ENCODE measurements at regions of chr9 and their contacts with region 1.

Region 1: GRCh38 chr9:85741875-85742629 is at the start of gene AGTPBP1:
- DNase-seq: peak; percentile 99
- ATAC-seq: peak; percentile 92
- H3K4me3 Mint-ChIP-seq: peak within 1 kb of the TSS; percentile 93
- H3K27ac Mint-ChIP-seq: peak within 1 kb of the TSS; percentile 90
- H3K4me1 Mint-ChIP-seq: peaks cover 22% of the 10 kb centered on the region
- H3K27me3 Mint-ChIP-seq: peaks cover 8% of the 10 kb centered on the region
- CTCF ChIP-seq: no peak
- total RNA-seq, gene AGTPBP1: 25.9 and 26.7 TPM in 2 replicates

Region 2: GRCh38 chr9:85702726-85703289 is 39.2 kb before region 1 on chr9:
- CTCF ChIA-PET with region 1: interaction called, 4 read pairs
- POLR2A ChIA-PET with region 1: interaction called, 5 read pairs
- intact Hi-C with region 1: loop called (anchors 1 kb)
- DNase-seq: no peak
- ATAC-seq: no peak
- H3K4me3 Mint-ChIP-seq: no peak overlapping the region
- H3K27ac Mint-ChIP-seq: no peak overlapping the region
- H3K4me1 Mint-ChIP-seq: peaks cover 19% of the 10 kb centered on the region
- H3K27me3 Mint-ChIP-seq: no peaks in the 10 kb centered on the region
- CTCF ChIP-seq: no peak

Region 3: GRCh38 chr9:85729882-85730281 is 12.2 kb before region 1 on chr9:
- CTCF ChIA-PET with region 1: no interaction called
- POLR2A ChIA-PET with region 1: interaction called, 3 read pairs
- intact Hi-C with region 1: loop called (anchors 2 kb)
- DNase-seq: no peak
- ATAC-seq: no peak
- H3K4me3 Mint-ChIP-seq: no peak overlapping the region
- H3K27ac Mint-ChIP-seq: no peak overlapping the region
- H3K4me1 Mint-ChIP-seq: peaks cover 42% of the 10 kb centered on the region
- H3K27me3 Mint-ChIP-seq: no peaks in the 10 kb centered on the region
- CTCF ChIP-seq: no peak

Region 4: GRCh38 chr9:86282077-86282978 is 540.3 kb after region 1 on chr9 and contains the start of gene ISCA1:
- CTCF ChIA-PET with region 1: no interaction called
- POLR2A ChIA-PET with region 1: interaction called, 3 read pairs
- intact Hi-C with region 1: loop called (anchors 1 kb)
- DNase-seq: peak; percentile 99
- ATAC-seq: peak; percentile 88
- H3K4me3 Mint-ChIP-seq: peak within 1 kb of the TSS; percentile 92
- H3K27ac Mint-ChIP-seq: peak within 1 kb of the TSS; percentile 93
- H3K4me1 Mint-ChIP-seq: peaks cover 35% of the 10 kb centered on the region
- H3K27me3 Mint-ChIP-seq: no peaks in the 10 kb centered on the region
- CTCF ChIP-seq: no peak
- total RNA-seq, gene ISCA1: 16.0 TPM in 2 replicates

Region 5: DNA sequence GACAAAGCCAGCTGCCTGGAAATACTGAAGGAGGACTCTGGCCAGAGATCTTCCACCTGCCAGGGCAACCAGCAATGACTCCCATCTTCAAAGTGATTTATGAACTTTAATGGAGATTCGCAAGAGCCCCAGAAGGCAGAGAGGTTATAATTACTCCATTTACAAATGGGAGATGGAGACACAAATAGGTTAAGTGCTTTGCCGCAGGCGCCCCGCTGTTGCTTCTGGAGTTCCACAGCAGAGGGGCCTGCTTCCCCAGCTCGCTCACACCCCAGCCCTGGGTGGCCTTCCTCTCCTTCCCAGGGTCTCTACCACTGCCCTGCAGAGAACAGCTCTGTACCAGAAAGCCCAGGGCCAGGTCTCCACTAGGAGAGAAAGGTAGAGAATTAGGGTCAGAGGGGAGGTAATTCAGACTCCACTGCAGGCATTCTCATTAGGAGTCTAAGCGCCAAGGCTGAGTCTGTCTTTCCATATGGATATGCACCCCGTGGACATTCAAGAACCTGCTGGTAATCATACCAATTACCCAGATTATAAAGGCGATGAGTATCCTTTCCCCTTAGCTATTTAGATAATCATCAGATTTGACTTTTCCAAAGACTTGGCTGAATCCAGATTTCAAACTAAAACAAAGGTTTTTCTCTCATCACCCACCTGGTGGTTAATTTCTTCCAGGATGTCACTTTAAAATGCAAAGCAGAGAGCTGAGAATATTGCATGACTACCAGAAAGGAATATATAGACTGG is 769.7 kb after region 1 on chr9:
- CTCF ChIA-PET with region 1: no interaction called
- POLR2A ChIA-PET with region 1: no interaction called
- intact Hi-C with region 1: no loop called
- DNase-seq: no peak
- ATAC-seq: no peak
- H3K4me3 Mint-ChIP-seq: no peak overlapping the region
- H3K27ac Mint-ChIP-seq: no peak overlapping the region
- H3K4me1 Mint-ChIP-seq: no peaks in the 10 kb centered on the region
- H3K27me3 Mint-ChIP-seq: no peaks in the 10 kb centered on the region
- CTCF ChIP-seq: no peak

Region 6: DNA sequence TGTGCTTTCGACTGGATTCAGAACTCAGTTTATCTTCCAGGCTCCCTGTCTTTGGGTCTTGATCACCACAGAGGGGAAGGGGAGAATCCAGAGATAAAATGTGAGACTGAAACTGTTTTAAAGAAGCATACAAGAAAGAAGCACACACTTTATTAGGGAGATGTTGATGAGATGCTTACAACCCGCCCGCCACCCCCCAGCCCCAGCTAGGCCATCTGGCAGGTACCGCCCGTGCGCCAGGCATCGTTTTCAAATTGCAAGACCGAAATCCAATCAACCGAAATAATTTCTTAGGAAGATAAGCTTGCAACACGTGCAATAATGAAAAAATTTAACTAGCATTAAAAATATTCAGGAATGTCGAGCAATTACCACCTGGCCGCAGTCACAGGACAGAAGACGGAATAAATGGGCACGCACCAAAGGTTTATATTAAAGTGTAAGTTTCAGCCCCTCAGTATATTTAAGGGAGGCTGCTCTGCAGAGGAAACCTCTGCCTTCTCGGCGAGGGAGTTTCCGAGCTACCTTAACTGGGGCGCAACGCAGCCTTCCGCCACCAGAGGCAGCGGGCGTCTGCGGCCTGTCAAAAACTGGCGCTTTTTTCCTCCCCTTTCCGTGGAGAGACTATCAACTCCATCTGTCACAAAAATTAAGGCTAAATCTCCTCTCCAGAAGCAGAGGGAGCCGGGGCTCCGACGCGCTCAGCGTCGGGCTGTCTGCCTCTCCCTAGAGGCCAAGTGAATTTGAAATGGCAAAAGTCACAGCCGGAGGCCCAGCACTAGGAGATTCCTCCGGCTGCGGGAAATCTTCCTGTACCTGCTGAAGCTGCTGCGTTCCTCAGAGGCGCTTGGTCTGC is 1206.2 kb after region 1 on chr9:
- CTCF ChIA-PET with region 1: no interaction called
- POLR2A ChIA-PET with region 1: no interaction called
- intact Hi-C with region 1: loop called (anchors 2 kb)
- DNase-seq: peak; percentile 42
- ATAC-seq: peak; percentile 72
- H3K4me3 Mint-ChIP-seq: peak overlapping the region; percentile 82
- H3K27ac Mint-ChIP-seq: no peak overlapping the region
- H3K4me1 Mint-ChIP-seq: peaks cover 19% of the 10 kb centered on the region
- H3K27me3 Mint-ChIP-seq: peaks cover 20% of the 10 kb centered on the region
- CTCF ChIP-seq: no peak

Measured in activated B cell treated with CpG ODN at 0.5 μM for 24 hours (primary cell).